ENCODE measurements at regions of chr2 and their contacts with region 1.

Region 1: DNA sequence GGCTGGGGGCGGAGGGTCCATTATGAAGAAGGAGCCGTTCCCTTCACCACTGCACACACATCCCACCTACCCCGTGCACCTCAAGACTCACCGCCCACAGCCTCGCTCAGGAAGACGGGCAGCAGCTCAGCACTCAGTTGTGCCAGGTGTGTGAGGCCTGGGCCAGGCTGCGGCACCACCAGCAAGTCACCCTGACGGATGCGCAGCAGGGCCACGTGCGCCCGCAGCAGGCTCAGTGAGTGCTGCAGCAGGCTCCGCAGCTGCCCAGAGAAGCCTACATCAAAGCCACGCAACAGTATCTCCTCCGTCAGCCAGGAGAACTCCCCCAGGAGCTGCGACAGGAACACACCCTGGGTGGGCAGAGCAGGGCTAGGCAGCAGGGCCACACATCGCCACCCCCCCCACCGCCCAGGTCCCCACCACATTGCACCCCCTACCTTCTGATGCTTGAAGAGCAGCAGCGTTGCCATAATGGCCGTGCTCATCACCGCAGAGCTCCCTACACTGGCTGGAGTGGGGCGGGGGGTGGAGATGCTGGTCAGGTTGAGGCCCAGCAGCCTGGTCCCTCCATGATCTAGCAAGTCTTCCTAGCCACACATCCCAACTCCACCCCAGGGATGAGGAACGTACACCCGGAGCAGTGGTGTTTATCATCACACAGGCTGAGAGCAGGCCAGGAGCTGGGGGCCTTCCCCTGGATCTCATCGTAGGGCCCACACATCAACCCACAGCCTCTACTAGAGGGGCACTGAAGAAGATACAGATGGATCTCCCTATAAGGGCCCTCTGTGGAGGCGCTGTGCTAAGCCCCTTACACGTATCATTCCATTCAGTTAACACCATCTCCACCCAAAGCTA is 10.2 kb downstream of the GPAT2 start:
- DNase-seq: no peak
- ATAC-seq: no peak
- H3K4me3 ChIP-seq: no peak overlapping the region
- H3K27ac ChIP-seq: no peak overlapping the region
- H3K4me1 ChIP-seq: no peaks in the 10 kb centered on the region
- H3K27me3 ChIP-seq: no peaks in the 10 kb centered on the region
- CTCF ChIP-seq: no peak
- POLR2A ChIP-seq: no peak
- RAD21 ChIP-seq: no peak

Region 2: DNA sequence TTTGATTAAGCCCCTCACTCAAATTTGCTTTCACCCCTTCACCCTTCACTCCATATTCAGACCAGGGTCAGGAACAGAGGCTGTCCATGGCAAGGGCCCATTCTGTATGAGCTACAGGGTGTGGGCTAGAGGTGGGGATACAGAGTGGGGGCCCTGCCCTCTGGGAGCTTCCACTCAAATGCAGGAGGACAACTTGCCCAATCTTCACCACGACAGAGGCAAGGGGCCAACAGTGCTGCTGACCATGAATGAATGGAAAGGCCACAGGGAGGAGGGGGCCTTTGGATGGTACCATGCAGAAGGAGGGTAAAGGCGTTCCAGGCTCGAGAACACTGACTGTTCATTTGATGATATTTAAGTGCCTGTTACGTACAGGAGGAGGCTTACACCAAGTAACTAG is 69.0 kb after region 1 on chr2:
- CTCF ChIA-PET with region 1: no interaction called
- POLR2A ChIA-PET with region 1: no interaction called
- dilution Hi-C with region 1: no loop called
- in situ Hi-C with region 1: no loop called
- intact Hi-C with region 1: no loop called
- DNase-seq: no peak
- ATAC-seq: no peak
- H3K4me3 ChIP-seq: no peak overlapping the region
- H3K27ac ChIP-seq: no peak overlapping the region
- H3K4me1 ChIP-seq: no peaks in the 10 kb centered on the region
- H3K27me3 ChIP-seq: peaks cover 25% of the 10 kb centered on the region
- CTCF ChIP-seq: no peak
- POLR2A ChIP-seq: no peak
- RAD21 ChIP-seq: no peak

Region 3: GRCh38 chr2:96116879-96117697 is 92.5 kb after region 1 on chr2:
- CTCF ChIA-PET with region 1: no interaction called
- POLR2A ChIA-PET with region 1: no interaction called
- dilution Hi-C with region 1: no loop called
- in situ Hi-C with region 1: loop called (anchors 25 kb)
- intact Hi-C with region 1: no loop called
- DNase-seq: peak; percentile 3
- ATAC-seq: peak; percentile 98
- H3K4me3 ChIP-seq: 0 out of 2 replicates have a peak overlapping the region, but pooled peaks have one; percentile 8
- H3K27ac ChIP-seq: no peak overlapping the region
- H3K4me1 ChIP-seq: peaks cover 2% of the 10 kb centered on the region; the same call in 1 of the 2 replicates
- H3K27me3 ChIP-seq: peaks cover 86% of the 10 kb centered on the region
- CTCF ChIP-seq: peak; percentile 89
- POLR2A ChIP-seq: no peak
- RAD21 ChIP-seq: peak; percentile 83

Region 4: DNA sequence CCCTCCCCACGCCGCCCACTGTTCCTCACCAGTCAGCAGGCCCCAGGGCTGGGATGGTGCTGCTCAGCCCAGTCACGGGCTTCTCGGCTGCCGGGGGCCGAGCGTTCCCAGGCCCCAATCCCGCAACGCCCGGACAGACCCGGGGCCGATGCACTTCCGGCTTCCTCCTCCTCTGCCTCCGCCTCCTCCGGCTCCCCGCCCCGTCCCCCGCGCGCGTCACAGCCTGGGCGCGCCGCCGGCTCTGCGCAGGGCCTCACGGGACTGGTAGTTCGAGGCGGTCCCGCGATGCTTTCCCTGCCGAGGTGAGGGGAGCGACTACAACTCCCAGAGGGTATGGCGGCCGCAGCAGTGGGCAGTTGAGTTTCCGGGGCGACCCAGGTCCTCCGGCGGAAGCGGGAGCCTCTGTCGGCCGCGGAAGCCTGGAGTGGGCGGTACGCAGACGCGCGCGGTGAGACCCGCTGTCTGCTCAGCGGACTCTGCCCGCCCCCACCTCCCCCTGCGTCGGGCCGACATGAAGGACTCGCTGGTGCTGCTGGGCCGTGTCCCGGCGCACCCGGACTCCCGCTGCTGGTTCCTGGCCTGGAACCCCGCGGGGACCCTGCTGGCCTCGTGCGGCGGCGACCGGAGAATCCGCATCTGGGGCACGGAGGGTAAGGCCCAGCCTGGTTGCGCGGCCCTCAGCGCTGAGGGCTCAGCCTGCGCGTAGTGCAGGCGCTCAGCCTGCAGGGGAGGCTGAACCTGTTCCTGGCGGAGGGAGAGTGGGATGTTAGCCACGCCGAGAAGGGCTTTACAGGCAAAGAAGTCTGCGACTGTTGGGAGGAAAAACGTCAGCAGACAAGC is 241.5 kb after region 1 on chr2 and contains the starts of genes CIAO1 and TMEM127:
- CTCF ChIA-PET with region 1: interaction called, 3 read pairs
- POLR2A ChIA-PET with region 1: no interaction called
- dilution Hi-C with region 1: no loop called
- in situ Hi-C with region 1: loop called (anchors 25 kb)
- intact Hi-C with region 1: no loop called
- DNase-seq: peak; percentile 98
- ATAC-seq: peak; percentile 97
- H3K4me3 ChIP-seq: peak within 1 kb of the TSS; percentile 84
- H3K27ac ChIP-seq: peak within 1 kb of the TSS; percentile 82
- H3K4me1 ChIP-seq: peaks cover 5% of the 10 kb centered on the region
- H3K27me3 ChIP-seq: no peaks in the 10 kb centered on the region
- CTCF ChIP-seq: 0 out of 2 replicates have a peak, but pooled peaks have one; percentile 17
- POLR2A ChIP-seq: peak; percentile 84
- RAD21 ChIP-seq: no peak; the same call in 1 of the 2 replicates
- total RNA-seq, gene CIAO1: 85.5 and 94.3 TPM in 2 replicates
- total RNA-seq, gene TMEM127: 20.0 and 35.7 TPM in 2 replicates

Region 5: GRCh38 chr2:96407041-96407918 is 382.7 kb after region 1 on chr2:
- CTCF ChIA-PET with region 1: no interaction called
- POLR2A ChIA-PET with region 1: no interaction called
- dilution Hi-C with region 1: no loop called
- in situ Hi-C with region 1: loop called (anchors 25 kb)
- intact Hi-C with region 1: no loop called
- DNase-seq: peak; percentile 79
- ATAC-seq: peak; percentile 97
- H3K4me3 ChIP-seq: no peak overlapping the region
- H3K27ac ChIP-seq: no peak overlapping the region
- H3K4me1 ChIP-seq: peaks cover 2% of the 10 kb centered on the region; the same call in 1 of the 2 replicates
- H3K27me3 ChIP-seq: peaks cover 37% of the 10 kb centered on the region
- CTCF ChIP-seq: peak; percentile 81
- POLR2A ChIP-seq: no peak
- RAD21 ChIP-seq: peak; percentile 74

Region 6: DNA sequence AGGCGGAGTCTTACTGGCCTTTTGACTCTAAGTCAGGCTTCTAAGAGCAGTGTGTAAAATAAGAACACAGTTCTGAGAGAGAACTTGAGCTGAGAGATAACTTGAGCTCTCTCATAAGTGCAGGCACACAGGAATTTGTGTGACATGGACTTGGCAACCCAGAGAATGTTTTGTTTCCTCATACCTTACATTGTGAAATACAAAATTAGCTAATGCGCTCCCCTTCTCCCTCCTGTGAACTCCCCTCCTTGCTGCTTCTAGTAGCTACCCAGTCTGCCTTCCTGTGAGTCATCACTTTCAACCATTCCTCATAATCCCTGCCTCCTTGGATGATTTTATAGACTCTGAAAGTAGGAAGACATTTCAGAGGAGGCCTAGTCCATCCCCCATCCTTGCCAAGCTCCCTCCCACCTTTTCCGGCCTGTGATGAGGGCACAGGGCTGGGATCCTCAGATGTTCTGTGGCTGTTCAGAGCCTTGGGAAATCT is 640.6 kb after region 1 on chr2:
- CTCF ChIA-PET with region 1: no interaction called
- POLR2A ChIA-PET with region 1: no interaction called
- dilution Hi-C with region 1: no loop called
- in situ Hi-C with region 1: no loop called
- intact Hi-C with region 1: no loop called
- DNase-seq: peak; percentile 99
- ATAC-seq: peak; percentile 99
- H3K4me3 ChIP-seq: no peak overlapping the region
- H3K27ac ChIP-seq: peak overlapping the region; percentile 61
- H3K4me1 ChIP-seq: peaks cover 4% of the 10 kb centered on the region
- H3K27me3 ChIP-seq: no peaks in the 10 kb centered on the region
- CTCF ChIP-seq: no peak
- POLR2A ChIP-seq: no peak
- RAD21 ChIP-seq: peak; percentile 21